PC-9 (cell line): ENCODE measurements at regions of chr4 and their contacts with region 1.

Region 1: DNA sequence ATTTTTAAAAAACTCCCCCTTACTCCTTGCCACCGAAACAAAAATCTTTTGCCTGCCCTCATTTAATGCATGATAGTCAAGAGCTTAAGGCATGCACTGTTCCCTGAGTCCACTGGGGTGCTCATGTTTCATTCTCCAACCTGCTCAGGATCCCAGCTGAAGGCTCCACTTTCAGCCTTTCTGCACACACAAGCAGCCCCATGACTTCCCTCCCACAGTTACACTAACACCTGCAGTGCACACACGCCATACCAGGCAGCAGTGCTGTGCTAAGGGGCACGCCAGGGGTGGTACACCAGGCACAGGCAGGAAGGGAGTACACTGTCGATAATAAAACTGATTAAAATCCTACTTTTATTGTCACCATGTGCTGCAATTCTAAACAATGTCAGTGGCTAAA is 385.2 kb downstream of the BMPR1B start:
- DNase-seq: no peak
- H3K4me3 ChIP-seq: no peak overlapping the region
- H3K27ac ChIP-seq: no peak overlapping the region
- H3K4me1 ChIP-seq: no peaks in the 10 kb centered on the region
- H3K27me3 ChIP-seq: no peaks in the 10 kb centered on the region
- CTCF ChIP-seq: no peak

Region 2: DNA sequence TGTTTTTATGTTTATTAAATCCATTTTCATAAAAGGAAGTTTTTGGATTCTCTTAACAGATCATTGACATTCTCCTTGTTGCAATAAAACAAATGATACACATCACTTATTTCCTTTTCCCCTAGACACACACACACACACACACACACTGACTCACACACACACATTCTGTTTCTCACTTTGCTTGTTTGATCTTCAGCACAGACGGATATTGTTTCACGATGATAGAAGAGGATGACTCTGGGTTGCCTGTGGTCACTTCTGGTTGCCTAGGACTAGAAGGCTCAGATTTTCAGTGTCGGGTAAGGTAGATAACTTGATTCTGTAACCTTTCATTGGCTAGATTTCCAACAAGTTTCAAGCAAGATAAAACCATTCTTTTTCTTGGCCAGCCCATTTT is 28.4 kb before region 1 on chr4:
- CTCF ChIA-PET with region 1: no interaction called
- POLR2A ChIA-PET with region 1: interaction called, 15 read pairs
- intact Hi-C with region 1: no loop called
- DNase-seq: no peak
- H3K4me3 ChIP-seq: no peak overlapping the region
- H3K27ac ChIP-seq: no peak overlapping the region
- H3K4me1 ChIP-seq: no peaks in the 10 kb centered on the region
- H3K27me3 ChIP-seq: no peaks in the 10 kb centered on the region
- CTCF ChIP-seq: no peak